Endothelial cell of umbilical vein (primary cell): ENCODE measurements at regions of chr15 and their contacts with region 1.

Region 1: GRCh38 chr15:41666353-41666920 is 6.2 kb downstream of the MGA start:
- DNase-seq: peak; percentile 45
- H3K4me3 ChIP-seq: no peak overlapping the region
- H3K27ac ChIP-seq: no peak overlapping the region
- H3K4me1 ChIP-seq: peaks cover 23% of the 10 kb centered on the region
- H3K27me3 ChIP-seq: no peaks in the 10 kb centered on the region
- CTCF ChIP-seq: no peak
- POLR2A ChIP-seq: no peak

Region 2: GRCh38 chr15:41207687-41208448 is 458.6 kb before region 1 on chr15:
- CTCF ChIA-PET with region 1: no interaction called
- POLR2A ChIA-PET with region 1: no interaction called
- dilution Hi-C with region 1: no loop called
- intact Hi-C with region 1: no loop called
- DNase-seq: no peak
- H3K4me3 ChIP-seq: no peak overlapping the region
- H3K27ac ChIP-seq: no peak overlapping the region
- H3K4me1 ChIP-seq: no peaks in the 10 kb centered on the region
- H3K27me3 ChIP-seq: peaks cover 0 to 4% of the 10 kb centered on the region in 2 experiments
- CTCF ChIP-seq: no peak
- POLR2A ChIP-seq: no peak

Region 3: GRCh38 chr15:41678742-41679141 is 12.3 kb after region 1 on chr15:
- CTCF ChIA-PET with region 1: interaction called, 4 read pairs
- POLR2A ChIA-PET with region 1: no interaction called
- dilution Hi-C with region 1: no loop called
- intact Hi-C with region 1: loop called (anchors 1 kb)
- DNase-seq: no peak
- H3K4me3 ChIP-seq: no peak overlapping the region
- H3K27ac ChIP-seq: no peak overlapping the region
- H3K4me1 ChIP-seq: no peaks in the 10 kb centered on the region
- H3K27me3 ChIP-seq: no peaks in the 10 kb centered on the region
- CTCF ChIP-seq: no peak
- POLR2A ChIP-seq: no peak